Left cardiac atrium (tissue), 4 donors: ENCODE measurements at regions of chr3 and their contacts with region 1.

Region 1: DNA sequence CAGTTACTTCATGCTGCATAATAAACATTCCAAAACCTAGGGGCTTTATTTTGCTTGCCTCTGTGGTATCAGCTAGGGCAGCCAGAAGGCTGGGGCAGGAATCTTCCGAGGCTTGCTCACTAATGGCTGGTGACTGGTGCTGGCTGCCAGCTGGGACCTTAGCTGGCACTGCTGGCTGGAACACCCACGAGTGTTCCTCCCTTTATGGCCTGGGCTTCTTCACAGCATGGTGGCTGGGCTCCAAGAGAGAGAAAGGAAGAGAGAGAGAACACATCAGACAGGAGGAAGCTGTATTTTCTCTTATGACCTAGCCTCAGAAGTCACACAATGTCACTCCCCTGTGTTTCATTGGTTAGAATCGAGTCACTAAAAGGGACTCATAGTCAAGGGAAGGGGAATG is 23.9 kb upstream of the CDCP1 start:
- DNase-seq: no peak
- ATAC-seq: peak; percentile 62

Region 2: DNA sequence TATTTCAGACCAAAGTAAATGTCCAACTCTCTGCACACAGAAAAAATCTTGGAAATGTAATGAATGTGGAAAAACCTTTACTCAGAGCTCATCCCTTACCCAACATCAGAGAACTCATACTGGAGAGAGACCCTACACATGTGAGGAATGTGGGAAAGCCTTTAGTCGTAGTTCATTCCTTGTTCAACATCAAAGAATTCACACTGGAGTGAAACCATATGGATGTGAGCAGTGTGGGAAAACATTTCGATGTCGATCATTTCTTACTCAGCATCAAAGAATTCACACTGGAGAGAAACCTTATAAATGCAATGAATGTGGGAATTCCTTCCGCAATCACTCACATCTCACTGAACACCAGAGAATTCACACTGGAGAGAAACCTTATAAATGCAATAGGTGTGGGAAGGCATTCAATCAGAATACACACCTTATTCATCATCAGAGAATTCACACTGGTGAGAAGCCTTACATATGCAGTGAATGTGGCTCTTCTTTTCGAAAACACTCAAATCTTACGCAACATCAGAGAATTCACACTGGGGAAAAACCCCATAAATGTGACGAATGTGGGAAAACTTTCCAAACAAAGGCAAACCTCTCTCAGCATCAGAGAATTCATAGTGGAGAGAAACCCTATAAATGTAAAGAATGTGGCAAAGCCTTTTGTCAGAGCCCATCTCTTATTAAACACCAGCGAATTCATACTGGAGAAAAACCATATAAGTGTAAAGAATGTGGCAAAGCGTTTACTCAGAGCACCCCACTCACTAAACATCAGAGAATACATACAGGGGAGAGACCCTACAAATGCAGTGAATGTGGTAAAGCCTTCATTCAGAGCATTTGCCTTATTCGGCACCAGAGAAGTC is 448.6 kb before region 1 on chr3:
- intact Hi-C with region 1: no loop called
- DNase-seq: no peak
- ATAC-seq: no peak

Region 3: DNA sequence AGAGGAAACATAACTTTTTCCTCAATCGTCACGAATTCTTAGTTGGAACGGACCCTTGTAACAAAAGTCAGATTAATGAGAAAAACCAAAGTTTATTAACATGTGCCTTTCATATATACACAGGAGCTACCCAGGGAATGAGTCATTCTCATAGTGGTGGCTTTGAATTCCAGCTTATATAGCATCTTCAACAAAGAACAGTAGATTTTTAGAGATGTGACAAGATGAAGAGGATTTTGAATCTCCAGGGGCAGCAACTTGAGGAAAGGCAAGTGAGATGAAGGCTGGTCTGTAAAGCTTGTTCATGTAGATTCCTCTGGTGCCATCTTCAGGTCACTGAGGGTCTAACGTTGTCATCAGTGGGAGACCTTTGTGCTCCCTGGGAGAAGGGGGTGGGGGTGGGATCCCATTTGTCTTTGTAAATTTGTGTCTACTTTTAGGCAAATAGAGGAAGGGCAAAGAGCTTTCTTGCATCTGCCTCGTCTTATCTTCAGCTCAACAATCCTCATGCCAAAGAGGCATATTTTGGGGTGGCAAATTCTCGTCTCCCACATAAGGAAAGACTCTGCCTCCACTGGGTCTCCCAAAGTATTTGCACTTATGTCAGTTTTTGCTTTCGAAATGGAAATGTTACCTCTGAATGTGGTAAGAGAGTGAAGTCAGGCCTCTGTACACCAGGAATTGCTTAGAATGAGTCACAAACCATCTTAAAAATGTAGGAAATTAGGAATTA is 114.5 kb before region 1 on chr3:
- intact Hi-C with region 1: loop called in 1 of 2 experiments (anchors 5 kb)
- DNase-seq: no peak
- ATAC-seq: peak in 1 of 2 donors; percentile 24

Region 4: GRCh38 chr3:45224824-45225464 is 54.8 kb after region 1 on chr3:
- intact Hi-C with region 1: no loop called
- DNase-seq: peak; percentile 80
- ATAC-seq: peak; percentile 70 to 74